A673 (cell line): ENCODE measurements at regions of chr14 and their contacts with region 1.

Region 1: DNA sequence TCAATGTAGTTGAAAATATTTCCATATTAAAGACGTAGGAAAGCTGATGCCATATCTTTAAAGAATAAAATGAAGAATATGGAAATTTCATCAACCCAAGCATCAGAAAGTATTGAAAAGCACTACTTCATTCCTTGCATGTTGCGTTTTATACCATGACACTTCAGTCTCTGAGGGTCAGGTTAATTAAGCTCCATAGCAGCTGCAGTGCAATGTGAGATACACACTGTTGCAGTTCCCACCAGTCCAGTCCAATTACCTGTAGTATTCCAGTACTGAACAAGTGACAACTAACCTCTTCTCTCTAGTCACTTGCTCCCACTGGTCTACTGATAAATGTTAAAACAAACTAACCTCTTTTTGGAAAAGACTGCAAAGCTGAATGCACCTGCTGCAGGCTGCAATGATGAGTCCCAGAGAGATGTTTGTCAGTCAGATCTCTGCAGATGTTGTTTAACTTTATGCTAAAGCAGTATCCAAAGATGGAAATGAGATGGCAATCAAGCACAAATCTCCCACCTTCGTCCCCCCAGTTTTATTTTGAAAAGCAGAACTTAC is 7.9 kb downstream of the NOVA1 start:
- DNase-seq: no peak
- H3K4me3 ChIP-seq: no peak overlapping the region
- H3K27ac ChIP-seq: no peak overlapping the region
- H3K4me1 ChIP-seq: peaks cover 32% of the 10 kb centered on the region
- H3K27me3 ChIP-seq: no peaks in the 10 kb centered on the region
- CTCF ChIP-seq: no peak

Region 2: GRCh38 chr14:27605282-27605681 is 1015.4 kb after region 1 on chr14:
- CTCF ChIA-PET with region 1: no interaction called
- POLR2A ChIA-PET with region 1: interaction called, 11 read pairs
- intact Hi-C with region 1: no loop called
- DNase-seq: peak; percentile 37
- H3K4me3 ChIP-seq: no peak overlapping the region
- H3K27ac ChIP-seq: no peak overlapping the region
- H3K4me1 ChIP-seq: no peaks in the 10 kb centered on the region
- H3K27me3 ChIP-seq: no peaks in the 10 kb centered on the region
- CTCF ChIP-seq: no peak